T-cell (primary cell): ENCODE measurements at regions of chr9 and their contacts with region 1.

Region 1: DNA sequence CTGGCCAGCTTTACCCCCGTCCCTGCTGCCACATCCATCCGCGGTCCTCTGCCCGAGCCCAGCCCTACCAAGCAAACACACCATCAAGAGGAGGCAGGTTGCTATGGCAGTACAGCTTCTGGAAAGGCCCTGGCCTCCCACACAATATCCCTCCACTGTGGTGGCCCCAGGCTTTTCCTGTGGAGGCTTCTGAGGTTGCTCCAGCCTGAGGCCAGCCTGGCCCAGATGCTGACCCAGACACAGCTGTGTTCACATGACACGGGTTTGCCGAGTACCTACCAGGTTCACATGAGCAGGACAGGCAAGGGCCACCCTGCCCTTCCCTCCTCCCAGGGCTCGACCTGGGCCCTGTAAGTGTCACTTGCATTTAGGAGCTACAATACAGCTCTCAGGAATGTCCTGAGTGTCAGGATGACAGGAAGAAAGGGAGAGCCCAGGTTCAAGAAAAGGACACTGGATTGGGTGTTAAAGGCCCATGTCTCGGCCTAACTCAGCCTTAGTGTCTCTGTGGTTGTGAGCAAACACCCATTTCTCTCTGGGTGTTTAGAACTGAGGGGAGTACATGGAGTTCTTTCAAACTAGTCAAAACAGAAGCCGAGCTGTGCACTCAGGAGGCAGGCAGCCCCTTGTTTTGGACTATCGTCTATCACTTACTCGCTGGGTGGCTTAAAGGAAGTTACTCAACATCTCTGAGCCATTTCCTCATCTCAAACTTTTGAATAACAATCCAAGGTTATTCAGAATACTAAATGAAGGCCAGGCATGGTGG is 40.2 kb downstream of the NAIF1 start:
- DNase-seq: peak in 34 of 35 experiments; percentile 25 to 84 (median 51)
- ATAC-seq: peak; percentile 1 to 21 (median 10)
- H3K4me3 ChIP-seq: peak overlapping the region; percentile 26 to 30
- H3K4me3 Mint-ChIP-seq: peak overlapping the region; percentile 80 to 89 (median 83)
- H3K27ac ChIP-seq: peak overlapping the region; percentile 93
- H3K27ac Mint-ChIP-seq: peak overlapping the region; percentile 97 to 98
- H3K4me1 ChIP-seq: peaks cover 72 to 99% of the 10 kb centered on the region in 2 experiments
- H3K4me1 Mint-ChIP-seq: peaks cover 81 to 94% (median 90%) of the 10 kb centered on the region in 3 donors
- H3K27me3 ChIP-seq: no peaks in the 10 kb centered on the region
- H3K27me3 Mint-ChIP-seq: no peaks in the 10 kb centered on the region

Region 2: GRCh38 chr9:127943731-127944144 is 83.2 kb before region 1 on chr9:
- CTCF ChIA-PET with region 1: interaction called in 1 of 2 experiments, 10 read pairs
- POLR2A ChIA-PET with region 1: interaction called in 1 of 2 experiments, 4 read pairs
- DNase-seq: peak; percentile 47 to 86 (median 67)
- ATAC-seq: peak; percentile 69 to 77 (median 69)
- H3K4me3 ChIP-seq: no peak overlapping the region
- H3K4me3 Mint-ChIP-seq: peak overlapping the region in 1 of 3 donors; percentile 3
- H3K27ac ChIP-seq: peak overlapping the region; percentile 16
- H3K27ac Mint-ChIP-seq: peak overlapping the region; percentile 74 to 78
- H3K4me1 ChIP-seq: peaks cover 2 to 62% of the 10 kb centered on the region in 2 experiments
- H3K4me1 Mint-ChIP-seq: peaks cover 44 to 52% (median 50%) of the 10 kb centered on the region in 3 donors
- H3K27me3 ChIP-seq: no peaks in the 10 kb centered on the region
- H3K27me3 Mint-ChIP-seq: no peaks in the 10 kb centered on the region